CD4-positive, alpha-beta memory T cell (primary cell): ENCODE measurements at regions of chr22 and their contacts with region 1.

Region 1: DNA sequence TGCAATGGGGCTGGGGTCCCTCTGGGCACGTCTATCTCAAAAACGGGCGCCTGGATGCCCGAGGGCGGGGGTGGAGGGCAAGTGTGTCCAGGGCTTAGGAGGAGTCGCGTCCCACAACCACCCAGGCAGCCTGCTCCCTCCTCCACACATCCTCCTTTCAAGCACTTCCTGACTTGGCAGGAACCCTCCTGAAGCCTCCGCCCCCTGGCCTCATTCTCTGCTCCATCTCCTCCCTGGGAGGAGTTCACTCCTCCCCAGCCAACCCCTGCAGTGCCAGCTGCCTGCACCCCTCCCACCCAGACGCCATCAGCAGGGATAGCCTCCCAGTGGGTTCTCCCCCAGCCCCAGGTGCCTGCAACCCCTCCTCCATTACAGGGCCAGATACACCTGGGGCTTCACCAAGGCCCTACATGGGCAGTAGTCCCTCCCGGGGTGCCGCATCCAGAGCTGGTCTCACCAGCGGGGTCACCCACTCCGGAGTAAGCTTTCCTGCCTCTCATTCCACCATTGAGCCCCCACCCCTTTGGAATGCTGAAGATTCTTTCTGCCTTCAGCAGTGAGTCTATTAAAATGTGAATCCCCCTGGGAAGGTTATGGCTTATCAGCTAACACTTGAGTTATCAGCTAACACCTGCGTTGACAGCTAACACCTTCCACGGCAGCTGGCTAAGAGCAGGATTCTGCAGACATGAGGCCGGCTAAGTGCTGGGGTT is 24.4 kb downstream of the RTN4R start:
- DNase-seq: peak; percentile 58 to 79 (median 61)
- H3K4me3 ChIP-seq: peak overlapping the region; percentile 24 to 51
- H3K4me3 Mint-ChIP-seq: peak overlapping the region; percentile 64 to 87 (median 78)
- H3K27ac ChIP-seq: peak overlapping the region; percentile 42
- H3K27ac Mint-ChIP-seq: peak overlapping the region; percentile 76 to 93 (median 90)
- H3K4me1 ChIP-seq: peaks cover 75% of the 10 kb centered on the region
- H3K4me1 Mint-ChIP-seq: peaks cover 22 to 51% (median 39%) of the 10 kb centered on the region in 4 donors
- H3K27me3 ChIP-seq: no peaks in the 10 kb centered on the region
- H3K27me3 Mint-ChIP-seq: no peaks in the 10 kb centered on the region

Region 2: GRCh38 chr22:20186183-20186870 is 57.4 kb before region 1 on chr22:
- CTCF ChIA-PET with region 1: no interaction called
- POLR2A ChIA-PET with region 1: no interaction called
- intact Hi-C with region 1: loop called (anchors 10 kb)
- DNase-seq: no peak
- H3K4me3 ChIP-seq: no peak overlapping the region
- H3K4me3 Mint-ChIP-seq: no peak overlapping the region
- H3K27ac ChIP-seq: no peak overlapping the region
- H3K27ac Mint-ChIP-seq: peak overlapping the region in 1 of 7 donors; percentile 50
- H3K4me1 ChIP-seq: no peaks in the 10 kb centered on the region
- H3K4me1 Mint-ChIP-seq: no peaks in the 10 kb centered on the region
- H3K27me3 ChIP-seq: no peaks in the 10 kb centered on the region
- H3K27me3 Mint-ChIP-seq: no peaks in the 10 kb centered on the region

Region 3: GRCh38 chr22:20205964-20206708 is 37.6 kb before region 1 on chr22:
- CTCF ChIA-PET with region 1: interaction called, 9 read pairs
- POLR2A ChIA-PET with region 1: interaction called, 23 read pairs
- intact Hi-C with region 1: loop called (anchors 1 kb)
- DNase-seq: peak; percentile 58 to 71 (median 67)
- H3K4me3 ChIP-seq: peak overlapping the region; percentile 78 to 96
- H3K4me3 Mint-ChIP-seq: peak overlapping the region; percentile 91 to 97 (median 96)
- H3K27ac ChIP-seq: peak overlapping the region; percentile 74
- H3K27ac Mint-ChIP-seq: peak overlapping the region; percentile 59 to 97 (median 95)
- H3K4me1 ChIP-seq: peaks cover 29% of the 10 kb centered on the region
- H3K4me1 Mint-ChIP-seq: peaks cover 13 to 36% (median 23%) of the 10 kb centered on the region in 4 donors
- H3K27me3 ChIP-seq: peaks cover 3% of the 10 kb centered on the region
- H3K27me3 Mint-ChIP-seq: peaks cover 0 to 1% of the 10 kb centered on the region in 2 donors

Region 4: DNA sequence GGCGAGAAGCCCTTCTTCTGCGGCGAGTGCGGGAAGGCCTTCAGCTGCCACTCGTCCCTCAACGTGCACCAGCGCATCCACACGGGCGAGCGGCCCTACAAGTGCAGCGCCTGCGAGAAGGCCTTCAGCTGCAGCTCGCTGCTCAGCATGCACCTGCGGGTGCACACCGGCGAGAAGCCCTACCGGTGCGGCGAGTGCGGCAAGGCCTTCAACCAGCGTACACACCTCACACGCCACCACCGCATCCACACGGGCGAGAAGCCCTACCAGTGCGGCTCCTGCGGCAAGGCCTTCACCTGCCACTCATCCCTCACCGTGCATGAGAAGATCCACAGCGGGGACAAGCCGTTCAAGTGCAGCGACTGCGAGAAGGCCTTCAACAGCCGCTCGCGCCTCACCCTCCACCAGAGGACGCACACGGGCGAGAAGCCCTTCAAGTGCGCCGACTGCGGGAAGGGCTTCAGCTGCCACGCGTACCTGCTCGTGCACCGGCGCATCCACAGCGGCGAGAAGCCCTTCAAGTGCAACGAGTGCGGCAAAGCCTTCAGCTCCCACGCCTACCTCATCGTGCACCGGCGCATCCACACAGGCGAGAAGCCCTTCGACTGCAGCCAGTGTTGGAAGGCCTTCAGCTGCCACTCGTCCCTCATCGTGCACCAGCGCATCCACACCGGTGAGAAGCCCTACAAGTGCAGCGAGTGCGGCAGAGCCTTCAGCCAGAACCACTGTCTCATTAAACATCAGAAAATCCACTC is 162.4 kb after region 1 on chr22:
- CTCF ChIA-PET with region 1: no interaction called
- POLR2A ChIA-PET with region 1: no interaction called
- intact Hi-C with region 1: no loop called
- DNase-seq: no peak
- H3K4me3 ChIP-seq: no peak overlapping the region
- H3K4me3 Mint-ChIP-seq: no peak overlapping the region
- H3K27ac ChIP-seq: no peak overlapping the region
- H3K27ac Mint-ChIP-seq: no peak overlapping the region
- H3K4me1 ChIP-seq: peaks cover 5% of the 10 kb centered on the region
- H3K4me1 Mint-ChIP-seq: peaks cover 5 to 11% (median 9%) of the 10 kb centered on the region in 4 donors
- H3K27me3 ChIP-seq: no peaks in the 10 kb centered on the region
- H3K27me3 Mint-ChIP-seq: no peaks in the 10 kb centered on the region